ENCODE measurements at regions of chr19 and their contacts with region 1.

Region 1: DNA sequence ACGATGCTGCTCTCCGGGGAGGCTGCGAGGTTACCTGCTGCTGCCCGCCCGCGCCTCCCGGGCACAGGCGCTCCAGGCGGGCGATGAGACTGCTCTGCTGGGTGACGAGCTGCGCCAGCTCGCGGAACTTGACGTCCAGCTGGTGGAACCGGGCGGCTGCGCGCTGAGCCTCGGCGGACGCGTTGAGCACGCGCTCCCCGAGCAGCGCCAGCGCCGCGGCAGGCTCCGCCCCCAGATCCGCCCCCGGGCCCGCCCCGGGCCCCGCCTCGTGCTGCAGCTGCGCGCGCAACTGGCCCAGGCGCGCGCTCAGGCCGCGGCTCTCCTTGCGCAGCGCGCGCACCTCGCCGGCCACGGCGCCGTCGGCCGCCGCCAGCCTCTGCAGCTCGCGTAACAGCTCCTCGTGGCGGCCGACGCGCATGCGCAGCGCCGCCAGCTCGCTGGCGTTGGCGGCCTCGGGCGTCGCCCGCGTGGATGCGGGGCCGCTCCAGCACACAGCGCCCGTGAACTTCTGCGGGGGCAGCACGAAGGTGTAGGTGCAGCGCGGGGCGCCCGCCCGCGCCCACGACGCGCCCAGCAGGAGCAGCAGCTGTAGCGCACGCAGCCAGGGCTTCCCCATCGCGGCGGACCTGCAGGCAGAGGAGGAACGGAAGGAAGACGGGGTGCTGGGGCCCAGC is 6.4 kb downstream of the ANGPTL6 start:
- H3K4me3 ChIP-seq: peak overlapping the region; percentile 25
- H3K27ac ChIP-seq: no peak overlapping the region; the same call in 1 of the 2 replicates
- H3K4me1 ChIP-seq: no peaks in the 10 kb centered on the region
- CTCF ChIP-seq: 0 out of 2 replicates have a peak, but pooled peaks have one; percentile 16

Region 2: GRCh38 chr19:10052602-10053360 is 43.3 kb before region 1 on chr19:
- CTCF ChIA-PET with region 1: no interaction called
- POLR2A ChIA-PET with region 1: no interaction called
- H3K4me3 ChIP-seq: no peak overlapping the region
- H3K27ac ChIP-seq: no peak overlapping the region
- H3K4me1 ChIP-seq: no peaks in the 10 kb centered on the region
- CTCF ChIP-seq: no peak

Region 3: DNA sequence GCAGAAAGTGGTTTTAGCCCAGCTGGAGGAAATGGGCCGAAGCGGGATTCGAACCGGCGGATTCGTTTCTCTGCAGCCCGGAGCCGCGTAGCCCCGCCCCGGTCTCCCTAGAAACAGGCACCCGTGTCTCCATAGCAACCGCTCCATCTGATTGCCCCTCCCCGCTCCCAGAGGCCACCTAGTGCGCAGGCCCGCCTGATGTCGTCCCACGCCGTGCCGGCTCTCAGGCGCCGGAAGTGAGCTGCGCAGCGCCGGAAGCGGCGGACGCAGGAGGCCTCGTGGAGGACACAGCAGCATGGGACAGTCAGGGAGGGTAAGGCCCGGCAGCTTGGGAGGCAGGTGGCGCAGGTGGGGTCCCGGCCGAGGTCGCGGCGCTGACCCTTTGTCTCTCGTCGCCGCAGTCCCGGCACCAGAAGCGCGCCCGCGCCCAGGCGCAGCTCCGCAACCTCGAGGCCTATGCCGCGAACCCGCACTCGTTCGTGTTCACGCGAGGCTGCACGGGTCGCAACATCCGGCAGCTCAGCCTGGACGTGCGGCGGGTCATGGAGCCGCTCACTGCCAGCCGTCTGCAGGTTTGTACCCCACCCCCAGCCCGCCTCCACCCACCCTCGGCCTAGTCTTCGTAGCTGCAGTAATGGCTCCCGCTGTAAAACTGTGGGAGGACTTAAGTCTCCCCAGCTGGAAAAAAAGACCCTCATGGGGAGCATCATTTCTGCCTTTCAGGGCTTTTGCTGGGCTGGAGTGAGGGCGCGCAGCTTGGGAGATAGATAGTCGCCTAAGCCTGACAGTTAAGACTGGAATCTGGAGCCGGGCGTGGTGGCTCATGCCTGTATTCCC is 10.2 kb after region 1 on chr19 and contains the start of gene PPAN:
- CTCF ChIA-PET with region 1: interaction called, 15 read pairs
- POLR2A ChIA-PET with region 1: interaction called, 26 read pairs
- H3K4me3 ChIP-seq: peak within 1 kb of the TSS; percentile 93
- H3K27ac ChIP-seq: peak within 1 kb of the TSS; percentile 71; the same call in 1 of the 2 replicates
- H3K4me1 ChIP-seq: no peaks in the 10 kb centered on the region
- CTCF ChIP-seq: peak; percentile 78

Region 4: DNA sequence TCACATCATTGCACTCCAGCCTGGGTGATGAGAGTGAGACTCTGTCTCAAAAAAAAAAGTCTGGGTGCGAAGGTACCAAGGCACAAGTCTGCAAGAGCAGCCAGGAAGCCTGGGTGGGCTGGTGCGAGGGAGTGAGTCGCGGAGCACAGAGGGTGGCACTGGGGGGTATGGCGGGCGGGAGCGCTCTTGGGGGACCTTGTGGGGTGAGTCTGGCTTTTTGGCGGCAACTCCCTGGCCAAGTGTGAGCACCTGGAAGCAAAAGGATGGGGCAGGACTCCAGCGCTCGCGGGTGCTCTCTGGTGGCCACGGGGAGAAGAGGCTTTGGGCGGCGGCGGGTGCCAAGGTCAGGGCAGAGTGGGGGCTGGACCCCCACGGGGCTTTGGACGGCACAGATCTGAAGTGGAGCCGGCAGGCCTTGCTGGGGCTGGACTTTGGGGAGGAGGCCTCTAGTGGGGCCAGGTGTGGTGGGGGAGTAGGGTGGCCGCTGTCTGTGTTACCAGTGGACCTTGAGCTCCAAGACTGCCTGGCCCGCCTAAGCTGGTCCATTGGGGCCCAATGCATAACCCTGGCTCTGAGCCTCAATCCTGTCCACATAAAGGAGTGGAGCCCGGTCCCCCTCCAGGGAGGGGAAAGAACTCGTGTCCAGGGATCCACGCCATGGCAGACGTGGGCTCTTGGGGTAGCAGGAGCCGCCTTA is 17.0 kb after region 1 on chr19:
- CTCF ChIA-PET with region 1: interaction called, 15 read pairs
- POLR2A ChIA-PET with region 1: interaction called, 14 read pairs
- H3K4me3 ChIP-seq: no peak overlapping the region
- H3K27ac ChIP-seq: no peak overlapping the region
- H3K4me1 ChIP-seq: no peaks in the 10 kb centered on the region
- CTCF ChIP-seq: peak; percentile 81

Region 5: GRCh38 chr19:10120538-10121189 is 24.6 kb after region 1 on chr19:
- CTCF ChIA-PET with region 1: interaction called, 11 read pairs
- POLR2A ChIA-PET with region 1: interaction called, 4 read pairs
- H3K4me3 ChIP-seq: no peak overlapping the region
- H3K27ac ChIP-seq: no peak overlapping the region
- H3K4me1 ChIP-seq: no peaks in the 10 kb centered on the region
- CTCF ChIP-seq: no peak

Measured in HEK293 (cell line).